Kidney (tissue), 22 donors: ENCODE measurements at regions of chr5 and their contacts with region 1.

Region 1: GRCh38 chr5:160333721-160334120 is 21.4 kb upstream of the CCNJL start:
- DNase-seq: no peak
- H3K4me3 ChIP-seq: no peak overlapping the region
- H3K27ac ChIP-seq: no peak overlapping the region
- H3K4me1 ChIP-seq: no peaks in the 10 kb centered on the region
- H3K27me3 ChIP-seq: no peaks in the 10 kb centered on the region
- CTCF ChIP-seq: no peak

Region 2: GRCh38 chr5:160030631-160031377 is 302.9 kb before region 1 on chr5:
- intact Hi-C with region 1: loop called (anchors 10 kb)
- DNase-seq: peak in 2 of 5 donors; percentile 9 to 76
- H3K4me3 ChIP-seq: no peak overlapping the region
- H3K27ac ChIP-seq: no peak overlapping the region
- H3K4me1 ChIP-seq: peaks cover 0 to 8% (median 3%) of the 10 kb centered on the region in 3 donors
- H3K27me3 ChIP-seq: no peaks in the 10 kb centered on the region
- CTCF ChIP-seq: no peak

Region 3: DNA sequence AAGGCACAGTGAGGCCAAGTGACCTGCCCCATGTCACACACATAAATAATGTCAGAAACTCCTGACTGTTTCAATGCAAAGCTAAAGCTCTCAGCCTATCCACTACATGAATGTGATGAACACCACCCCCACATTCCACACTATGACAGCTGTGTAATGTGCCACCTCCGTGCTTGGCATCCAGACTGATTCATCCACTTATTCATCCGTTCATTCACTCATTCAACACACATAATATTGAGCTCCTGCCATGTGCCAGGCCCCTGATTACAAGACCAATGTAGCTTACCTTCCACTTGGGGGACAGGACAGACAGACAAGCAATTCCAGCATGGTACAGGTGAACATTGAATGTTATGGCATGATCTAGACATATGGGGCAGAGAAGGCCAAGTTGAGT is 150.6 kb before region 1 on chr5:
- intact Hi-C with region 1: no loop called
- DNase-seq: no peak
- H3K4me3 ChIP-seq: no peak overlapping the region
- H3K27ac ChIP-seq: no peak overlapping the region
- H3K4me1 ChIP-seq: no peaks in the 10 kb centered on the region
- H3K27me3 ChIP-seq: no peaks in the 10 kb centered on the region
- CTCF ChIP-seq: no peak